Activated CD8-positive, alpha-beta T cell treated with anti-CD3 and anti-CD28 coated beads, Interleukin-2, amount 10 ng/mL, durations not matched to agents 7 days and 5 days (primary cell): ENCODE measurements at regions of chr1 and their contacts with region 1.

Region 1: DNA sequence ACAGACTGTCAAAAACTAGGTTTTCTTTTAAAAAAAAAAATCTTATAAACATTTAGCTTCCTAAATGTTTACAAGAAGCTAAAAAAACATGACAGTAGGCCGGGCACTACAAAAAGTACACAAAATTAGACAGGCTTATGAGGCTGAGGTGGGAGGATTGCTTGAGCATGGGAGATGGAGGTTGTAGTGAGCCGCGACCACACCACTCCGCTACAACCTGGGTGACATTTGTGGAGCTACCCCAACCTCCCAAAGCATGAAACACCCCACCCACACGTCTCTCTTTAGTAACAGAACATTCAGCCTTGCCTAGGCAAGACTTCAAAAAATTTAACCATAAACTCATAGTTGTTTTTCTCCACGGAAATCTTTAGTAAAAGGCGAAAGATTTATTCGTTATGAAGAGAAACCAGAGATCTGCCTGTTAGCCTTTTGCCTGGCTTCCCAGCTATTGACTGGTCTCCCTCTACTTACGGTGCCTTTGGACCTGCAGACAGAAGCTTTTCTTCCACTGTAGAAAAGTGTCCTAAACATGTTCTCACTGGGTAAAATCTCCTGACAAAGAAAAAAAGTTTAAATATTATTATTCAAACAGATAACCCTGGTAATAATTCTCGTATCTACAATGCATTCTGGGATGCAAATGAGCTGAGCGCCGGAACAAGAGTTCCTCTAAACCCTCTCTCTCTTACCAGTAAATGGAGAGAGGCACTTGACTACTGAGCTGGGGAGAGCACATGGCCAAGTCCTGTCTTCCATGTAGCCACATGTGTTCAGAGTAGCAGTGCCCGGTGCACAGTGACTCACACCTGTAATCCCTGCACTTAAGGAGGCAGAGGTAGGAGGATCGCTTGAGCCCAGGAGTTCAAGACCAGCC is 9.2 kb downstream of the RNU5D-1 start:
- DNase-seq: peak; percentile 93
- ATAC-seq: peak; percentile 86
- H3K4me3 Mint-ChIP-seq: peak overlapping the region; percentile 52
- H3K27ac Mint-ChIP-seq: peak overlapping the region; percentile 99
- H3K4me1 Mint-ChIP-seq: peaks cover 75% of the 10 kb centered on the region
- H3K27me3 Mint-ChIP-seq: no peaks in the 10 kb centered on the region

Region 2: GRCh38 chr1:44594871-44595746 is 126.6 kb before region 1 on chr1:
- CTCF ChIA-PET with region 1: no interaction called
- POLR2A ChIA-PET with region 1: no interaction called
- DNase-seq: peak; percentile 82
- ATAC-seq: peak; percentile 96
- H3K4me3 Mint-ChIP-seq: no peak overlapping the region
- H3K27ac Mint-ChIP-seq: no peak overlapping the region
- H3K4me1 Mint-ChIP-seq: no peaks in the 10 kb centered on the region
- H3K27me3 Mint-ChIP-seq: no peaks in the 10 kb centered on the region

Region 3: GRCh38 chr1:44674113-44675000 is 47.4 kb before region 1 on chr1 and contains the starts of genes ARMH1 and TMEM53:
- CTCF ChIA-PET with region 1: interaction called, 4 read pairs
- POLR2A ChIA-PET with region 1: interaction called, 70 read pairs
- DNase-seq: peak; percentile 99
- ATAC-seq: peak; percentile 97
- H3K4me3 Mint-ChIP-seq: peak within 1 kb of the TSS; percentile 83
- H3K27ac Mint-ChIP-seq: peak within 1 kb of the TSS; percentile 87
- H3K4me1 Mint-ChIP-seq: peaks cover 28% of the 10 kb centered on the region
- H3K27me3 Mint-ChIP-seq: no peaks in the 10 kb centered on the region
- total RNA-seq, gene ARMH1: 80.0 to 88.4 TPM
- total RNA-seq, gene TMEM53: 4.0 to 4.6 TPM

Region 4: GRCh38 chr1:44707959-44708831 is 13.5 kb before region 1 on chr1:
- CTCF ChIA-PET with region 1: interaction called, 7 read pairs
- POLR2A ChIA-PET with region 1: interaction called, 55 read pairs
- DNase-seq: peak; percentile 60
- ATAC-seq: peak; percentile 89
- H3K4me3 Mint-ChIP-seq: peak overlapping the region; percentile 23
- H3K27ac Mint-ChIP-seq: peak overlapping the region; percentile 33
- H3K4me1 Mint-ChIP-seq: peaks cover 16% of the 10 kb centered on the region
- H3K27me3 Mint-ChIP-seq: peaks cover 5% of the 10 kb centered on the region

Region 5: GRCh38 chr1:44775078-44775929 is 53.6 kb after region 1 on chr1 and contains the start of gene RPS8:
- CTCF ChIA-PET with region 1: no interaction called
- POLR2A ChIA-PET with region 1: interaction called, 58 read pairs
- DNase-seq: peak; percentile 95
- ATAC-seq: peak; percentile 80
- H3K4me3 Mint-ChIP-seq: peak within 1 kb of the TSS; percentile 86
- H3K27ac Mint-ChIP-seq: peak within 1 kb of the TSS; percentile 97
- H3K4me1 Mint-ChIP-seq: peaks cover 33% of the 10 kb centered on the region
- H3K27me3 Mint-ChIP-seq: no peaks in the 10 kb centered on the region
- total RNA-seq, gene RPS8: 1,750 to 1,777 TPM

Region 6: GRCh38 chr1:44799770-44800584 is 78.3 kb after region 1 on chr1 and contains the start of gene PLK3:
- CTCF ChIA-PET with region 1: interaction called, 5 read pairs
- POLR2A ChIA-PET with region 1: interaction called, 53 read pairs
- DNase-seq: peak; percentile 99
- ATAC-seq: peak; percentile 77
- H3K4me3 Mint-ChIP-seq: peak within 1 kb of the TSS; percentile 96
- H3K27ac Mint-ChIP-seq: peak within 1 kb of the TSS; percentile 100
- H3K4me1 Mint-ChIP-seq: peaks cover 42% of the 10 kb centered on the region
- H3K27me3 Mint-ChIP-seq: no peaks in the 10 kb centered on the region
- total RNA-seq, gene PLK3: 64.8 to 68.0 TPM

Region 7: GRCh38 chr1:44985747-44986359 is 264.1 kb after region 1 on chr1:
- CTCF ChIA-PET with region 1: no interaction called
- POLR2A ChIA-PET with region 1: interaction called, 19 read pairs
- DNase-seq: no peak
- ATAC-seq: peak; percentile 17
- H3K4me3 Mint-ChIP-seq: peak overlapping the region; percentile 98
- H3K27ac Mint-ChIP-seq: peak overlapping the region; percentile 93
- H3K4me1 Mint-ChIP-seq: peaks cover 17% of the 10 kb centered on the region
- H3K27me3 Mint-ChIP-seq: no peaks in the 10 kb centered on the region

Region 8: DNA sequence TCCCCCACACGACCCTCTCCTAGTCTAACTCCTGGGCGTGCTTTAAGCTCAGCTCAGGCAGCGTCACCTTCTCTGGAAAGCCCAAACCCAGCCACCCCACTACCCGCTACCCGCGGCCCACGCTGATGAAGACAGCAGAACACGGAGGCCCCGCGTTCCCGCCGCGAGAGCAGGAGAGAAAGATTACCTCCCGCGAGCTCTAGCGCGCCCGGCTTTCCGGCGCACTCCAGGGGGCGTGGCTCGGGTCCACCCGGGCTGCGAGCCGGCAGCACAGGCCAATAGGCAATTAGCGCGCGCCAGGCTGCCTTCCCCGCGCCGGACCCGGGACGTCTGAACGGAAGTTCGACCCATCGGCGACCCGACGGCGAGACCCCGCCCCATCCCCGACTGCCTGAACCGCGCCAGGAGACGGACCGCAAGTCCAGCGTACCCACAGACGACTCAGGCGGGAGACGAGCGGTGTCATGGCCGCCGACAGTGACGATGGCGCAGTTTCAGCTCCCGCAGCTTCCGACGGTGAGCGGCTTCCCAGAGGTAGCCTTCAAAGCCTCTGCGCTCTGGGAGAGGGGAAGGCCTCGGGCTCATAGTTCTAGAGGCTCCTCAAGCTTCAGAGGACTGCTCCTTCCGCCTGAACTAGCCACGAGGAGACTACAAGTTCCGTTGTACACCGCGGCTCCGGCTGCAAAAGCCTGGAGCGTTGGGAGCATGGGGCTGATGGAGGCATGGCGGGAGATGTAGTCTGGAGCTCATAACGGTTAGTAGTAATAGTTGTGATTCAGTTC is 618.3 kb after region 1 on chr1 and contains the starts of genes MUTYH and TOE1:
- CTCF ChIA-PET with region 1: no interaction called
- POLR2A ChIA-PET with region 1: interaction called, 20 read pairs
- DNase-seq: peak; percentile 97
- ATAC-seq: peak; percentile 91
- H3K4me3 Mint-ChIP-seq: peak within 1 kb of the TSS; percentile 100
- H3K27ac Mint-ChIP-seq: peak within 1 kb of the TSS; percentile 100
- H3K4me1 Mint-ChIP-seq: peaks cover 53% of the 10 kb centered on the region
- H3K27me3 Mint-ChIP-seq: no peaks in the 10 kb centered on the region
- total RNA-seq, gene MUTYH: 59.8 to 61.8 TPM
- total RNA-seq, gene TOE1: 25.4 to 25.9 TPM